ENCODE measurements at regions of chr3 and their contacts with region 1.

Region 1: GRCh38 chr3:121735047-121735696 is 14.4 kb downstream of the GOLGB1 start:
- DNase-seq: no peak
- ATAC-seq: no peak
- H3K4me3 ChIP-seq: no peak overlapping the region
- H3K4me3 Mint-ChIP-seq: no peak overlapping the region
- H3K27ac ChIP-seq: no peak overlapping the region
- H3K27ac Mint-ChIP-seq: no peak overlapping the region
- H3K4me1 ChIP-seq: peaks cover 0 to 2% of the 10 kb centered on the region in 2 experiments
- H3K4me1 Mint-ChIP-seq: peaks cover 52 to 61% (median 55%) of the 10 kb centered on the region in 3 donors
- H3K27me3 ChIP-seq: no peaks in the 10 kb centered on the region
- H3K27me3 Mint-ChIP-seq: no peaks in the 10 kb centered on the region

Region 2: DNA sequence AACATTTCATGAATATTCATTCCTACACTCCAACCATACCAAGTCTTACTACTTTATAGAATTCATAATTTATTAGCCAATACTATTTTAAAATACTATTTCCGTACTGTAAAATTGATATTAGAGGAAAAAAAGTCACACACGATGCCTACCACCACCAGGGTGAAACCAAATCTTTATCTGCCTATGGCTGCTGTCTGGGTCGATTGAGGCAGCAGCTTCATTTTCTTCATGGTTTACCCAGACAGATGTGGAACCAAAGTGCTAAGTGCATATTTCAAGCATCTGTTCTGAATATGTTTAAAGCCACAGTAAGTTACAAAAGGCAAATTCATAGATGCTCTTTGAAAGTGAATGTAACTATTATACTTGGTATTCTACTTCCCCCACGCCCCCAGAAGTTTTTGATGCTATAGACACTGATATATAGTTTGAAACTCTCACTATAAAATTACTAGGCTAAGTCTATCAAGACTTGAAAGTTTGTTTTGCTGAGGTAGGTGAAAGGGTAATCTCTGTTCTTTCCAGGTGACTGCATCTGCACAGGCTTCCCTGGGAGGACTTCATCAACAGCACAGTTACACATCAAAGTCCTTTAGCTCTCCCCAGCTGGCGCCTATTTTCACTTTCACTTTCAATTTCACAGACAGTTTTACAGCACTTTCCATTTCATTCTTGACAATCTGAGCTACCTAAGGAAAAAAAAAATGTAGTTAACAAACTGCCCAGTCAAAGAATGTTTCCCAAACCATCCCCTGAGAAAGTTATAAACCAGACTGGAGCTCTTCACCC is 303.2 kb before region 1 on chr3:
- CTCF ChIA-PET with region 1: no interaction called
- POLR2A ChIA-PET with region 1: no interaction called
- DNase-seq: peak in 32 of 35 experiments; percentile 7 to 78 (median 36)
- ATAC-seq: peak; percentile 88 to 99 (median 96)
- H3K4me3 ChIP-seq: peak overlapping the region in 1 of 2 donors; percentile 11
- H3K4me3 Mint-ChIP-seq: peak overlapping the region; percentile 71 to 76 (median 75)
- H3K27ac ChIP-seq: peak overlapping the region; percentile 45
- H3K27ac Mint-ChIP-seq: peak overlapping the region; percentile 58 to 85
- H3K4me1 ChIP-seq: peaks cover 0 to 7% of the 10 kb centered on the region in 2 experiments
- H3K4me1 Mint-ChIP-seq: peaks cover 12 to 18% (median 13%) of the 10 kb centered on the region in 3 donors
- H3K27me3 ChIP-seq: no peaks in the 10 kb centered on the region
- H3K27me3 Mint-ChIP-seq: no peaks in the 10 kb centered on the region

Region 3: DNA sequence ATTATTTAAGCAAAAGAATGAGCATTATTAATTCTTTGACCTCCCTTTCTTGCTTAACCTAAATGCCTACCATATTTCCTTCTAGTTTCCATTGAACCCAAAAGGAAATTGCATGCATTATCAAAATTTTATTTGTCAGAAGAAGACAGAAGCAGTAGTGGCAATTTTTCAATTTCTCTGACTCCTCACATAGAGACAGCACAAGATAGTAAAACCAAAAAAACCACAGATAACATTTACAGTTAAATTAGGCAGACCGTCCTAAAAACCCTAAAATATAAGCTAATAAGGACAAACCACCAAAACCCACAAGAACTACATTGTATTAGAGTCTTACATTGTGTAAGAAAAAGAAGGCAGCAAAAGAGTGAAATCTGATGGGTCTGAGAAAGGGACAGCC is 12.8 kb before region 1 on chr3:
- CTCF ChIA-PET with region 1: no interaction called
- POLR2A ChIA-PET with region 1: interaction called in 1 of 2 experiments, 14 read pairs
- DNase-seq: no peak
- ATAC-seq: no peak
- H3K4me3 ChIP-seq: no peak overlapping the region
- H3K4me3 Mint-ChIP-seq: no peak overlapping the region
- H3K27ac ChIP-seq: no peak overlapping the region
- H3K27ac Mint-ChIP-seq: no peak overlapping the region
- H3K4me1 ChIP-seq: peaks cover 3 to 4% of the 10 kb centered on the region in 2 experiments
- H3K4me1 Mint-ChIP-seq: peaks cover 17 to 19% (median 19%) of the 10 kb centered on the region in 3 donors
- H3K27me3 ChIP-seq: no peaks in the 10 kb centered on the region
- H3K27me3 Mint-ChIP-seq: no peaks in the 10 kb centered on the region

Region 4: GRCh38 chr3:121998030-121998580 is 262.9 kb after region 1 on chr3:
- CTCF ChIA-PET with region 1: no interaction called
- POLR2A ChIA-PET with region 1: no interaction called
- DNase-seq: peak in 1 of 35 experiments; percentile 6
- ATAC-seq: no peak
- H3K4me3 ChIP-seq: no peak overlapping the region
- H3K4me3 Mint-ChIP-seq: no peak overlapping the region
- H3K27ac ChIP-seq: no peak overlapping the region
- H3K27ac Mint-ChIP-seq: no peak overlapping the region
- H3K4me1 ChIP-seq: peaks cover 0 to 7% of the 10 kb centered on the region in 2 experiments
- H3K4me1 Mint-ChIP-seq: peaks cover 4 to 23% (median 8%) of the 10 kb centered on the region in 3 donors
- H3K27me3 ChIP-seq: peaks cover 0 to 6% of the 10 kb centered on the region in 2 experiments
- H3K27me3 Mint-ChIP-seq: peaks cover 8 to 10% of the 10 kb centered on the region in 2 donors